Activated CD4-positive, alpha-beta T cell treated with anti-CD3 and anti-CD28 coated beads for 36 hours (primary cell): ENCODE measurements at regions of chr16 and their contacts with region 1.

Region 1: DNA sequence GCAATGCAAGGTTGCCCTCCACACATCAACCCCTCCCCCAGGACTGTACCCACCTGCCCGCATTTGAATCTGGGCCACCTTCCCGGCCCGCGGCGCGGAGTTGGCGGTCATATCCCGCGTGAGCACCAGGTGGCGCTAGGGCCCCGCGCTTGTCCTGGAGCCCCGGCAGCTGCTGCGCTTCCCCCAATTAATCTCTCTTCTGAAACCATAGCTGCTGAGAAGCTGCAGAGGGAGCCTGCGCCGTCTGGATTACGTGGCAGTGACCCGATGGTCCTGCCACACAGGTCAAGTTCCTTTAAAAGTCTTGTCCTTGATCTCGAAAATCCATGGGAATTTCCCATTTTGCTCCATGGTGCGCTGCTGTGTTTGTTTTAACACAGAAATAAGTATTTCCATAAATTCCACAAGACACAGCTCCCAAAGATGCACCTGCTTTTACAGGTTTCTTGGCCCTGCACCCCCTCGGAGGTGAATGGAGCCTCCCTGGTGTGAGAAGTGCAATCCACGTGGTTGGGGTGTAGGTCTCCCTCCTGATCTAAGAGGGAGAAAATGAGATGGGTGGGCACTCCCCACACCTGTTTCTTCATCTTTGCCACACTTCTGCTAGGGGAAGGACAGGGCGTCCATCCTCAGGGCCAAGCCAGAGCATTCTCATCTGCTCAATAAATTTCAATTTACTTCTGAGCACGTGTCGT is 22.1 kb downstream of the COX4I1 start:
- DNase-seq: peak; percentile 90
- ATAC-seq: peak; percentile 89
- H3K4me3 Mint-ChIP-seq: no peak overlapping the region
- H3K27ac Mint-ChIP-seq: no peak overlapping the region
- H3K4me1 Mint-ChIP-seq: peaks cover 11% of the 10 kb centered on the region
- H3K27me3 Mint-ChIP-seq: peaks cover 7% of the 10 kb centered on the region

Region 2: DNA sequence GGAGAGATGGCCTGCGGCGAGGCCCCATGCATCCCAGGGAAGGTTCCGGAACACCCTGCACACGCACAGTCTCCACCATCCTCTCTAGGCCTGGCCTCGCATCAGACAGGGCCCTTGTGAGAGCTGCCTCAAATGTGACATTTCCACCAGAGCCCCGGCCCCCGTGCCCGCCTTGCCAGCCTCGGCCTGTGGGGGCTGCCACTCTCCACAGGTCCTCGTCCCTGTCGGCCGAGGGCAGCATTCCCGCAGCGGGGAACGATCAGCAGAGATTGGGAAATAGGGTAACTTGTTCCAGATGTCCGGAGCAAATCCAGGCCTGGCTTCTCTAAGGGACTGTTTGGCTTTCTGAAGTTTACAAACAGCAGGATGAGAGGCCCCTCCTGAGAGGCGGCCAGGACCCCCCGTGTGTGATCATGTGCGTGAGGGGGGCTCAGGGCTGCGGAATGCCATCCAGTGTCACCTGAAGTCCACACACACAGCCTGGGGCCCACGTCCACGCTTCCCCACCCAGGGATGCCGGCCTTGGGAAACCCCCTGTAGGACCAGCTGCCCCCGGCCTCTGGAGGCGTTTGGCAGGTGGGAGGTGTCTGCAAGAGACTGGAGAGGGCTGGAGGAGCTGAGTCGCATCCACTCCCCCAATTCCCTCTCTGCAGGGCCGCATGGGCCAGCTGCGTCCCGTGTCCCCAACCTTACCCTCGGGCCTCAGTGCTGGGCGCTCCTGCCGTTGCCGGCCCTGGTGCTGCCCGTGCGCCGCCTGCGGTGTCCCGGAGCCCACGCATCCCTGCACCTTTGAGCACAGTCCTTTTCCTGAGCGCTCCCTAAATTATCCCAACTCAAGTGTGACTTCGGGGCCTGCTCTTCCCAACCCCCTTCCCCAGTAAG is 880.7 kb before region 1 on chr16:
- CTCF ChIA-PET with region 1: no interaction called
- POLR2A ChIA-PET with region 1: no interaction called
- intact Hi-C with region 1: no loop called
- DNase-seq: no peak
- ATAC-seq: no peak
- H3K4me3 Mint-ChIP-seq: no peak overlapping the region
- H3K27ac Mint-ChIP-seq: no peak overlapping the region
- H3K4me1 Mint-ChIP-seq: no peaks in the 10 kb centered on the region
- H3K27me3 Mint-ChIP-seq: peaks cover 2% of the 10 kb centered on the region

Region 3: GRCh38 chr16:85809645-85810044 is 11.9 kb before region 1 on chr16:
- CTCF ChIA-PET with region 1: interaction called, 10 read pairs
- POLR2A ChIA-PET with region 1: interaction called, 3 read pairs
- intact Hi-C with region 1: no loop called
- DNase-seq: no peak
- ATAC-seq: no peak
- H3K4me3 Mint-ChIP-seq: no peak overlapping the region
- H3K27ac Mint-ChIP-seq: no peak overlapping the region
- H3K4me1 Mint-ChIP-seq: no peaks in the 10 kb centered on the region
- H3K27me3 Mint-ChIP-seq: peaks cover 5% of the 10 kb centered on the region

Region 4: DNA sequence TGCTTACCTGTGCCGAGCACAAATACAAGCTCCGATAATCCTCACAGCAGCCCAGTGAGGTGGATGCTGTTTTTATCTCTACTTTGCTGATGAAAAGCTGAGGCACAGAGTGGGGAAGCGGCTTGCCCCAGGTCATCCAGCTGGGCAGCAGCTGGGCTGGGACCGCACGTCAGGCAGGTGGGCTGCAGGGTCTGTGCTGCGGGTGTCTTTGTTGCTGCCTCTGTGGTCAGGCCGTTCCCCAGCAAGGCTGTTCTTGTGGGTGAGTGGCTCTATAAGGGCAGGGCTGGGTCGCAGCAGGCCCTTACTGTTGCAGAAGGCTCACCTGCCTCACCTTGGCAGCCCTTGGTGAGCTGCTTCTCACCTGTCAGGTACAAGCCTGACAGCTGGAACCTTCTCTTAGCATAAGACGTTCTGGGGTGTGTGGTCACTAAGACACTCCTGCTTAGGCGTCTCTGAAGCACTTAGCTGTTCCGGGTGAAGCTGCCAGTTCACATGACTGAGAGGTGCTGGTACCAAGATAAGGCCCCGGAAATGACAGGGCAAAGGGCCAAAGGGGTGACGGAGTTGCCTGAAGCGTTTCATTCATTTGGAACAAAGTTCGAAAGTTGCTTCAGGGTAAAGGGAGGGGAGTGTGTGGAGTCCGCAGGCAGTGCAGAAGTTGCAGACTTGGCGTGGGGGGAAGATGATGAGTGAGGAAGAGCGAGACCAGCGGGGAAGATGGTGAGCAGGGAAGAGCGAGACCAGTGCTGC is 94.7 kb after region 1 on chr16:
- CTCF ChIA-PET with region 1: interaction called, 11 read pairs
- POLR2A ChIA-PET with region 1: interaction called, 6 read pairs
- intact Hi-C with region 1: no loop called
- DNase-seq: no peak
- ATAC-seq: no peak
- H3K4me3 Mint-ChIP-seq: no peak overlapping the region
- H3K27ac Mint-ChIP-seq: peak overlapping the region; percentile 61
- H3K4me1 Mint-ChIP-seq: peaks cover 7% of the 10 kb centered on the region
- H3K27me3 Mint-ChIP-seq: no peaks in the 10 kb centered on the region

Region 5: DNA sequence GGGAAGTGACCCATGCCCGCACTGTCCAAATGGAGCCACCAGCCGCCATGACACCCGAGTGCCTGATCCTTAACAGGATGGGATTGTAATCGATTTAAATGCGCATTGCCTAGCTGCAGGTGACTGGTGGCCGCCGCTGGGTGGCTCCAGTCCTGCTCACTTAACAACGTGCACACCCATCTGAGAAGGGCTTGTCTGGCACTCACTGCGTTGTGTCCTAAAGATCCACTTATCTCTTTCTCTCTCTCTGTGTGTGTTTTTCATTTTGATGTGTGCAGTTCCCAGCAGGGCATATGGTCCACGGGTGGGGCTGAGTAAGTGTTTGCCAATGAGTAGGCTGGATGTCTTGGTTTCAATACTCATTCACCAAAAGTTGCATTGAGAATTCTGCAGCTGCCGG is 158.0 kb after region 1 on chr16:
- CTCF ChIA-PET with region 1: interaction called, 120 read pairs
- POLR2A ChIA-PET with region 1: no interaction called
- intact Hi-C with region 1: no loop called
- DNase-seq: peak; percentile 32
- ATAC-seq: peak; percentile 76
- H3K4me3 Mint-ChIP-seq: no peak overlapping the region
- H3K27ac Mint-ChIP-seq: no peak overlapping the region
- H3K4me1 Mint-ChIP-seq: peaks cover 34% of the 10 kb centered on the region
- H3K27me3 Mint-ChIP-seq: peaks cover 6% of the 10 kb centered on the region

Region 6: DNA sequence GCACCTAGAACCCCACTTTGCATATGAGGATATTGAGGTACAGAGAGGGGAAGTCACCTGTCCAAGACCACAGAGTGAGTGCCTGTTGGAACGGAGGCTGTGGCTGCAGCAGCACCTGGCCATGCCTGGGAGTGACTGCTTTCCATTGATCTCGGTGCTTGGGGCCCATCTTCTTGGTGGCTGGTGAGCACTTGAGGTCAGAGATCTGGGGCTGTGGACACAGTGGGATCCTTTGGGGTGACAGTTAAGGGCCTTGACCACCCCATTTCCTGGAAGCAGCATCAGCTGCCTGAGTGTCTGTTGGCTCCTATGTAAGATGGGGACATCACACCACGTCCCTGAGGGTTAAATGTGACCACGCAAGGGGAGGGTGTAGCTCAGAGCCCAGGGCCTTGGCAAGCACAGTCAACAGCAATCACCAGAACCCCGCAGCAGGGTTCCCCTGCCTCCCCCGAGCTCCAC is 189.1 kb after region 1 on chr16:
- CTCF ChIA-PET with region 1: interaction called, 88 read pairs
- POLR2A ChIA-PET with region 1: no interaction called
- intact Hi-C with region 1: no loop called
- DNase-seq: no peak
- ATAC-seq: no peak
- H3K4me3 Mint-ChIP-seq: no peak overlapping the region
- H3K27ac Mint-ChIP-seq: no peak overlapping the region
- H3K4me1 Mint-ChIP-seq: peaks cover 40% of the 10 kb centered on the region
- H3K27me3 Mint-ChIP-seq: peaks cover 6% of the 10 kb centered on the region

Region 7: DNA sequence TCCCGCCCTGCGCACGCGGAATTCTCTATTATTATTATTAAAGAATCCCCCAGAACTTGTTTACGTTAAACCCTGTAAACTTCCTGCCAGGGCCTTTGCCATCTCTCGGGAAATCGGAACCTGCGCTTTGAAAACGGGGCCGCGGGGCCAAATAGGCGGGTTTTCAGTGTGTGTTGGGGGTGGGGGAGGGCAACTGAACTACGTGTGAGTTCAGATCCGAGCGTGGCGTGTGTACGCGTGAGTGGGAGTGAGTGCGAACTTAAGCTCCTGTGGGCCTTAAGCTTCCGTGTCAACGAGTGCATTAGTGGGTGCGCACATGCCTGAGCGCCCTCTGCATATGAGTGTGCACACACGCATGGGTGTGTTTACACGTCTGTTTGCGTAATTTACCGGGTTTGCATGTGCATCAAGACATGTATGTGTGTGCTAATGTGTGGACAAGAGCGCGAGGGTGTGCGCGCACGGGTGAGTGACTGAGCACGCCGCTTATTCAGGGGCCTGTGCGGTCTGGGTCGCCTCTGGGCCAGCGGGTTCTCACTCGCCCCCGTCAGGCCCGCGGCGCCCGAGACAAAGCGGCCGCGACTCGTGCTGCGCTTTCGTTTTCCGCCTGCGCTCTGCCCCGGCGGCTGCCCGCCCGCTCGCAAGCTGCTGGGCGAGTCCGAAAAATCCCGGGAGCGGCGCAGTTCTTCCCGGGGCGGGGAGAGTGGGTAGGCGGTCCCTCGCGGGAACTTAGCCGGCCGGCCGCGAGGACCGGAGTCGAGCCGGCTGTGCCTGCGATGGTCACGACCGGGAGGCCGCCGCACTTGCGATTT is 687.6 kb after region 1 on chr16:
- CTCF ChIA-PET with region 1: no interaction called
- POLR2A ChIA-PET with region 1: no interaction called
- intact Hi-C with region 1: loop called in 1 of 2 experiments (anchors 5 kb)
- DNase-seq: peak; percentile 41
- ATAC-seq: peak; percentile 23
- H3K4me3 Mint-ChIP-seq: peak overlapping the region; percentile 56
- H3K27ac Mint-ChIP-seq: peak overlapping the region; percentile 0
- H3K4me1 Mint-ChIP-seq: peaks cover 32% of the 10 kb centered on the region
- H3K27me3 Mint-ChIP-seq: peaks cover 61% of the 10 kb centered on the region

Region 8: GRCh38 chr16:86718118-86718517 is 896.5 kb after region 1 on chr16:
- CTCF ChIA-PET with region 1: no interaction called
- POLR2A ChIA-PET with region 1: no interaction called
- intact Hi-C with region 1: no loop called
- DNase-seq: peak; percentile 28
- ATAC-seq: peak; percentile 57
- H3K4me3 Mint-ChIP-seq: no peak overlapping the region
- H3K27ac Mint-ChIP-seq: no peak overlapping the region
- H3K4me1 Mint-ChIP-seq: peaks cover 2% of the 10 kb centered on the region
- H3K27me3 Mint-ChIP-seq: peaks cover 10% of the 10 kb centered on the region